ENCODE measurements at regions of chr3 and their contacts with region 1.

Region 1: DNA sequence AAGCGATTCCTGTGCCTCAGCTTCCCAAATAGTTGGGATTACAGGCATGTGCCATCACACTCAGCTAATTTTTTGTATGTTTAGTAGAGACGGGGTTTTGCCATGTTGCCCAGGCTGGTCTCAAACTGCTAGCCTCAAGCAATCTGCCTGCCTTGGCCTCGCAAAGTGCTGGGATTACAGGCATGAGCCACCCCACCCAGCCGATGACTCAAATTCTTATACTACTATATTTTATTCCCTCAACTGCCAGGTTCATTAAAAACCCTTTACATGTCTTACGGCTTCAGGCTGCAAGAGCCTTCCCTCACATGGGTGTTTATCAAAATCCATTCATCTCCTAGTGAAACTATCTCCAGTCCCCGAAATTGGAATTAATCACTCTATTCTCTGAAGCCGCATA is 63.4 kb downstream of the CBLB start:
- DNase-seq: no peak
- H3K4me3 ChIP-seq: no peak overlapping the region
- H3K27ac ChIP-seq: no peak overlapping the region
- H3K4me1 ChIP-seq: peaks cover 0 to 6% of the 10 kb centered on the region in 2 donors
- H3K27me3 ChIP-seq: no peaks in the 10 kb centered on the region
- CTCF ChIP-seq: no peak

Region 2: DNA sequence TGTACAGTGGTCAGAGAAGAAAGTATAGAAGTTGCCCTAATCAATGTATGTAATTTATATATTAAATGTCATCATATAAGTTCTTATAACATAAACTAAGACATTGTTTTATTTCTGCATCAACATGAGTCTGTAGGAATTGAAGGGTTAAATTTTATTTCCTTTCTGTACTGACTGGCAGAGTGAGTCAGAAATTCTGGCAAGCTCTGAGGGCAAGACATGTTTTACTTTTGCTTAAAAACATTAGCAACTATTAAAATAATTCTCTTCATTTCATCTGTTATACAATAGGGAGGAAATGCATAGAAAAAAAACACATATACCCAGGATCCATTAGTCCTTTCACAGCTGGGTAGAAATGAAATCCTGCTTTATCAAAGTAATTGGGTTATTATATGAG is 610.1 kb before region 1 on chr3:
- intact Hi-C with region 1: no loop called
- DNase-seq: no peak
- H3K4me3 ChIP-seq: no peak overlapping the region
- H3K27ac ChIP-seq: no peak overlapping the region
- H3K4me1 ChIP-seq: no peaks in the 10 kb centered on the region
- H3K27me3 ChIP-seq: no peaks in the 10 kb centered on the region
- CTCF ChIP-seq: no peak

Region 3: GRCh38 chr3:105856605-105857004 is 51.2 kb after region 1 on chr3:
- intact Hi-C with region 1: loop called (anchors 2 kb)
- DNase-seq: no peak
- H3K4me3 ChIP-seq: no peak overlapping the region
- H3K27ac ChIP-seq: no peak overlapping the region
- H3K4me1 ChIP-seq: peaks cover 0 to 7% of the 10 kb centered on the region in 2 donors
- H3K27me3 ChIP-seq: no peaks in the 10 kb centered on the region
- CTCF ChIP-seq: no peak